SK-N-SH (cell line): ENCODE measurements at regions of chr17 and their contacts with region 1.

Region 1: GRCh38 chr17:8409966-8410864 is 12.6 kb upstream of the RNF222 start:
- DNase-seq: peak; percentile 80
- H3K4me3 ChIP-seq: peak overlapping the region in 1 of 2 experiments; percentile 48; a peak in 1 of 4 replicates
- H3K27ac ChIP-seq: no peak overlapping the region
- H3K4me1 ChIP-seq: no peaks in the 10 kb centered on the region
- H3K27me3 ChIP-seq: peaks cover 17% of the 10 kb centered on the region; the same call in 1 of the 2 replicates
- CTCF ChIP-seq: peak; percentile 84
- EP300 ChIP-seq: no peak
- RAD21 ChIP-seq: peak; percentile 85

Region 2: DNA sequence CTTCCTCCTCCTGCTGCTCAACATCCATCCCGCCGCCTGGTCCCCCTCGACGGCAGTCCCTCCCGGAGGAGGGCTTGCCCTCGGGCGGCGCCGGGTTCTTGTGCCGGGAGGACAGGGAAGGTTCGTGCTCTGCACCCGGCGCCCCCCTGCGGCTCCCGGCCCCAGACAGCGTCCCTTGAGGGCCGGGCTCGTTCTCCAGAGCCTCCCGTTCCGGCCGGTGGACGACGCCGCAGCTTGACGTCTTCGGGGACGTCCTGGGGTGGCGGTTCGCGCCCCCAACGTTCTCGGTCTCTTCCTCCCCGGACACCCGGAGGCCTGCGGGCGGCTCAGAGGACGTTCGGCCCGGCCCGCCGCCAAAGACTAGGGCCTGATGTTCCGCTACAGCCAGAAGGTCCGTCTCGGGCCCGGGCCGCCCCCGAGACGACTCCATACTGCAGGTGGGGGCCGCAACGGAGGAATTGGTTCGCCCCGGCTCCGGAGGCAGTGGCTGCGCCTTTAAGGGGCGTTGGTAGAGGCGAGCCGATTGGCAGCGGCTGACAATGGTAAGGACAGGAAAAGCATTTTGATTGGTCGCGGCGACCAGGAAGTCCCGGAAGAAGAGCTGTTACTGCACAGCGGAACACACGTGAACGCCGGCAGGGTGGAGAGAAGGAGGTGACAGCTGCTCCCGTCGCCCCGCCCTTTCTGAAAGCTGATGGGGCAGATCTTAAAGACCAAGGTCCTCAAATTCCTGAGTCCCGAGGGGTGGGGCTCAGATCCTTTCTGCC is 220.3 kb before region 1 on chr17 and contains the start of gene BORCS6:
- CTCF ChIA-PET with region 1: no interaction called
- POLR2A ChIA-PET with region 1: no interaction called
- DNase-seq: peak; percentile 86
- H3K4me3 ChIP-seq: peak within 1 kb of the TSS; percentile 79 to 86
- H3K27ac ChIP-seq: peak within 1 kb of the TSS; percentile 79 to 80
- H3K4me1 ChIP-seq: peaks cover 9 to 33% of the 10 kb centered on the region in 2 experiments; a peak in 3 of 4 replicates
- H3K27me3 ChIP-seq: no peaks in the 10 kb centered on the region
- CTCF ChIP-seq: peak; percentile 23
- EP300 ChIP-seq: no peak
- RAD21 ChIP-seq: no peak
- polyA plus RNA-seq, gene BORCS6: 3.7 and 4.3 TPM in 2 replicates

Region 3: GRCh38 chr17:8393420-8394241 is 16.6 kb before region 1 on chr17:
- CTCF ChIA-PET with region 1: interaction called, 11 read pairs
- POLR2A ChIA-PET with region 1: no interaction called
- DNase-seq: no peak
- H3K4me3 ChIP-seq: no peak overlapping the region
- H3K27ac ChIP-seq: no peak overlapping the region
- H3K4me1 ChIP-seq: no peaks in the 10 kb centered on the region; a peak in 1 of 4 replicates
- H3K27me3 ChIP-seq: peaks cover 22% of the 10 kb centered on the region; the same call in 1 of the 2 replicates
- CTCF ChIP-seq: no peak
- EP300 ChIP-seq: no peak
- RAD21 ChIP-seq: no peak

Region 4: DNA sequence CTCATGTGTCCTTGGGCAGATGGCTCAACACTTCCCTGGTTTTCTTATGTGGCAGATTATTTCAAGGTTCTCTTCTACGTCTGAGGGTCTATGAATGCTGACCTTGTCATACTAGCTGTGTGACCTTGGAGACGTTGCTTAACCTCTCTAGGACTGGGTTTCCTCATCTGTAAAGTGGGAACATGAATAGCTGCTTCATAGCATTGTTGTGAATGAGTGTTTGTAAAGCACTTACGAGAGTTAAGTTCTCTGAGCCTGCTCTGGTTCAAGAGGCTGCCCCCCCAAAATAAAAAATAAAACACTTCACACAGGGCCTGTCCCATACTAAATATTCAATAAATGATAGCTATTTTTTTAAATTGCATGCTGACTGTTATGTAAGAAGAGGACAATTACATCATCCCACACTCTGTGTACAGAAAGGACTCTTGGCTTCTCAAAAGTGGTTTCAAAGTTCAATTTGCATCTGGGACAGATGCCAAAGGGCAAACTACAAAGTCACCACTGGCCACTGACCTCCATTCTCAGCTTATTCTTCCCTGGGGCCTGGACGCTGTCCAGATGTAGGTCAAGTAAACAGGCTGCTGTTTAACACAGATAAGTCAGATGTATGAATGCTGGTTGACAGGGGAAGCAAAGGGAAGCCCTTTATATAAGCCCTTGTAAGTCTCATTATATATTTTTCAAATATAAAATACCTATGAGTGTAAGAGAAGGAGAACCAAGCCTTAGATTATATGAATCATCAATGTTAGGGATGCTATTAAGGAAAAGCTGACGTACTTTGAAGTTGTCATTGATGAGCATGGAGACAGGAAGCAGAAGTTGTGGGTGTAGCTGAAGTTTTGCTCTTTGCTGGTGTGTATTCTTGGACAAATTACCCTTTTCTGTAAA is 10.1 kb after region 1 on chr17:
- CTCF ChIA-PET with region 1: interaction called, 19 read pairs
- POLR2A ChIA-PET with region 1: no interaction called
- DNase-seq: peak; percentile 72
- H3K4me3 ChIP-seq: no peak overlapping the region
- H3K27ac ChIP-seq: peak overlapping the region in 1 of 2 experiments; percentile 18; a peak in 1 of 4 replicates
- H3K4me1 ChIP-seq: peaks cover 0 to 3% of the 10 kb centered on the region in 2 experiments; a peak in 1 of 4 replicates
- H3K27me3 ChIP-seq: peaks cover 14% of the 10 kb centered on the region; the same call in 1 of the 2 replicates
- CTCF ChIP-seq: no peak
- EP300 ChIP-seq: peak in 1 of 2 experiments; percentile 22; a peak in 1 of 4 replicates
- RAD21 ChIP-seq: no peak